ENCODE measurements at regions of chr15 and their contacts with region 1.

Region 1: DNA sequence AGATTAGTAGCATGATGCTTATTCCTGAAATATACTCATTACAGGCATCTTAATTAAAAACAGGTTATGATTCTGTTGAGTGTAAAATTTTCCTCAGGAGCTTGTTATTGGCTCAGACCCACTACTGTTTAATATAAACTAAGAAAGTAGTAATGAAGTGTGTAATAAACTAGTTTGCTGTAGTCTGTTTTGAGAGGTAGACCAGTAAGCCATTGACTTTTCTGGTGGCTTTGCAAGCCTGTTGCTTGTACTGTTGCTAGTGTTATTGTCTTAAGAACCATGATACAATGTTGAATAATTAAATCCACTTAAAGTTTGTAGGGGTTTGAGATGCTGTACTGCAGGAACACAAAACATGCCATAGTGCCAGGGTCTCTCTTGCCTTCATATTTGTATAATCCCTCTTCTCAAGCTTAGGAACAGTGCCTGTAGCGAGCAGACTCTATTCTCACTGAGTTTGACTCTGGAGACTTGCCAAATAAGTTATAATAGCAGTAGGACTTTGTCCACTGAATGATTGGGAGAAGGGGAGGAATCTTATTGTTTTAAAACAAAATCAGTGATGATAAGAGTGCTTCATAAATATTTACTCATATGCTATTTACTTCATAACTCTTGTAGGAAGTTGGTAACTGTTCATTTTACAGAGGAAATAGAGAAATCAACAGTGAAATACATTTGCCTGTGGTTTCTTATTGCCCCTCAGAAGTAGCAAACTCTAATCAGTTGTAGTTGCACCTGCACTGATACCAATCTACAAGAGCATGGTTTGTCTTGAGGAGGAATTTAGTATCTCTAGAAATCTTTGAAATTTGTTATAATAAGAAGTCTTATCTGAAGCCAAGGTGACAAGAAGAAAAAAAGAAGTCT is 13.4 kb downstream of the TCF12 start:
- DNase-seq: no peak
- H3K4me3 Mint-ChIP-seq: no peak overlapping the region
- H3K27ac Mint-ChIP-seq: no peak overlapping the region
- H3K4me1 Mint-ChIP-seq: peaks cover 68% of the 10 kb centered on the region
- H3K27me3 Mint-ChIP-seq: no peaks in the 10 kb centered on the region

Region 2: DNA sequence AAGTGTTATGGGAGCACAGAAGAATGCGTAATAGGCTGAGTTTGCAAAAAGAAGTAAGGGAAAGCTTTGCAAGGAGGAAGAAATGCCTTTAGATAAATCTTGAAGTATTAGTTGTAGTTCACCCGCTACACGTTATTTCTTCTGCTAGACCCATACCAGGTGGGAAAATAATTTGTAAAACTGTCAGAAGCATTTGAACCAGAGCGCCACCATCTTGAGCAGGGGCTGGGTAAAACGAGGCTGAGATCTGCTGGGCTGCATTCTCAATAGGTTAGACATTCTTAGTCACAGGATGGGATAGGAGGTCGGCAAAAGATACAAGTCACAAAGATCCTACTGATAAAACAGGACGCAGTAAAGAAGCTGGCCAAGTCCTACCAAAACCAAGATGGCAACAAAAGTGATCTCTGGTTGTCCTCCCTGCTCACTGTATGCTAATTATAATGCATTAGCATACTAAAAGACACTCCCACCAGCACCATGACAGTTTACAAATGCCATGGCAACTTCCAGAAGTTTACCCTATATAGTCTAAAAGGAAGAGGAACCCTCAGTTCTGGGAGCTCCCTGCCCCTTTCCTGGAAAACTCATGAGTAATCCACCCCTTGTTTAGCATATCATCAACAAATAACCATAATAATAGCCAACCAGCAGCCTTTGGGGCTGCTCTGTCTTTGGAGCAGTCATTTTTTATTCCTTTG is 148.6 kb before region 1 on chr15:
- CTCF ChIA-PET with region 1: no interaction called
- POLR2A ChIA-PET with region 1: no interaction called
- intact Hi-C with region 1: no loop called
- DNase-seq: no peak
- H3K4me3 Mint-ChIP-seq: no peak overlapping the region
- H3K27ac Mint-ChIP-seq: no peak overlapping the region
- H3K4me1 Mint-ChIP-seq: peaks cover 21% of the 10 kb centered on the region
- H3K27me3 Mint-ChIP-seq: peaks cover 14% of the 10 kb centered on the region

Region 3: GRCh38 chr15:56959318-56959648 is 27.4 kb after region 1 on chr15:
- CTCF ChIA-PET with region 1: no interaction called
- POLR2A ChIA-PET with region 1: no interaction called
- intact Hi-C with region 1: no loop called
- DNase-seq: no peak
- H3K4me3 Mint-ChIP-seq: no peak overlapping the region
- H3K27ac Mint-ChIP-seq: no peak overlapping the region
- H3K4me1 Mint-ChIP-seq: peaks cover 44% of the 10 kb centered on the region
- H3K27me3 Mint-ChIP-seq: no peaks in the 10 kb centered on the region

Region 4: DNA sequence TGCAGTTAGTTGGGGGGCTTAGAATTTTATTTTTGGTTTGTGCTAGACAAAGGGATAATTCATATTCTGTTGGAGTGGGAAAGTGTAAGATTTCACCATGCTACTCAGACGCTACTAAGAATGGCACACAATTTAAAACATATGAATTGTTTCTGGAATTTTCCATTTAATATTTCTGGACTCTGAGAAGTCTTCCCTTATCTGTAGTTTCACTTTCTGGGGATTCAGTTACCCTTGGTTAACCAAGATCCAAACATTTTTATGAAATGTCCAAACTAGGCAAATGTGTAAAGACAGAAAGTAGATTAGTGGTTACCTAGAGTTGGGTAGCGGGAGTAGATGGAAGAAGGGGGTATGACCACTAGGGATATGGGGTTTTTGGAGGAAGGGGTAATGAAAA is 39.7 kb after region 1 on chr15:
- CTCF ChIA-PET with region 1: no interaction called
- POLR2A ChIA-PET with region 1: no interaction called
- intact Hi-C with region 1: loop called (anchors 5 kb)
- DNase-seq: no peak
- H3K4me3 Mint-ChIP-seq: no peak overlapping the region
- H3K27ac Mint-ChIP-seq: no peak overlapping the region
- H3K4me1 Mint-ChIP-seq: peaks cover 47% of the 10 kb centered on the region
- H3K27me3 Mint-ChIP-seq: no peaks in the 10 kb centered on the region

Region 5: GRCh38 chr15:57165992-57166391 is 234.1 kb after region 1 on chr15:
- CTCF ChIA-PET with region 1: no interaction called
- POLR2A ChIA-PET with region 1: no interaction called
- intact Hi-C with region 1: no loop called
- DNase-seq: peak; percentile 35
- H3K4me3 Mint-ChIP-seq: no peak overlapping the region
- H3K27ac Mint-ChIP-seq: no peak overlapping the region
- H3K4me1 Mint-ChIP-seq: peaks cover 2% of the 10 kb centered on the region
- H3K27me3 Mint-ChIP-seq: no peaks in the 10 kb centered on the region

Measured in activated CD4-positive, alpha-beta memory T cell treated with anti-CD3 and anti-CD28 coated beads for 36 hours (primary cell).